ENCODE measurements at regions of chr1 and their contacts with region 1.

Region 1: DNA sequence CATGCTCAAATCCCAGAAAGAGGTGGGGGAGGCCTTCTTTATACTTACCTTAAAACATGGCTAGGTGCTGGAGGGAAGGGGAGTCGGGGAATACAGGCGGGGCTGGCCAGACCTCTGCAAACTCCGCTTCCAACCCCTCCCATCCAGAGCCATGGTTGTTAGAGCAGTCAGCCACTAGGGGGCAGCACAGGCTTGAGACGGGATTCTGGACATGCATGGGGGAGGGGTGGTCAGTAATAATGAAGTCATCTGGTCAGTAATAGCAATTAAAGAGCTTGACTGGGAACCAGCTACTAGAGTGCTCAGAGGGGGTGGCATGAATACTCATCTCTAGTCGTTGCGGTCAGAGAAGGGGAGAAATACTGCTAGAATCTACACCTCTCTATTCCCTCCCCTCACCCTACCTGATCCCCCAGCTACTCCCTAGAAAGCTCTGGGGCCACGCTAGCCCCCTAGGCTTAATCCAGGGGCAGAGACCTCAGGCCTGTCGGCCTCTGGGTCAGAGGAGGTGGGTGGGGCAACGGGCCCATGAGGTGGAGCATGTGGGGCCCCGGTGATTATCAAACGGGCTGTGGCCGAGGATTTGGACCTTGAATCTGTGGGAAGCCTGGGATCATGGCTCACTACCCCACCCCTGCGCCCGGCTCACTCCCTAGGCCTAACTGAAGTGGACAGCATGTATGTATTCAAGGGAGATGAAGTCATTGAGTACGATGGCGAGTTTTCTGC is 2.9 kb downstream of the CASQ1 start:
- DNase-seq: peak; percentile 83
- H3K4me3 ChIP-seq: no peak overlapping the region
- H3K27ac ChIP-seq: no peak overlapping the region
- H3K4me1 ChIP-seq: peaks cover 7% of the 10 kb centered on the region
- CTCF ChIP-seq: peak; percentile 96

Region 2: GRCh38 chr1:160219062-160219929 is 26.0 kb after region 1 on chr1:
- CTCF ChIA-PET with region 1: interaction called, 3 read pairs
- POLR2A ChIA-PET with region 1: no interaction called
- intact Hi-C with region 1: loop called (anchors 1 kb)
- DNase-seq: no peak
- H3K4me3 ChIP-seq: no peak overlapping the region
- H3K27ac ChIP-seq: no peak overlapping the region
- H3K4me1 ChIP-seq: no peaks in the 10 kb centered on the region
- CTCF ChIP-seq: peak; percentile 49

Region 3: GRCh38 chr1:160251687-160252526 is 58.7 kb after region 1 on chr1:
- CTCF ChIA-PET with region 1: interaction called, 12 read pairs
- POLR2A ChIA-PET with region 1: interaction called, 4 read pairs
- intact Hi-C with region 1: loop called (anchors 1 kb)
- DNase-seq: peak; percentile 83
- H3K4me3 ChIP-seq: no peak overlapping the region
- H3K27ac ChIP-seq: no peak overlapping the region
- H3K4me1 ChIP-seq: no peaks in the 10 kb centered on the region
- CTCF ChIP-seq: peak; percentile 96

Region 4: DNA sequence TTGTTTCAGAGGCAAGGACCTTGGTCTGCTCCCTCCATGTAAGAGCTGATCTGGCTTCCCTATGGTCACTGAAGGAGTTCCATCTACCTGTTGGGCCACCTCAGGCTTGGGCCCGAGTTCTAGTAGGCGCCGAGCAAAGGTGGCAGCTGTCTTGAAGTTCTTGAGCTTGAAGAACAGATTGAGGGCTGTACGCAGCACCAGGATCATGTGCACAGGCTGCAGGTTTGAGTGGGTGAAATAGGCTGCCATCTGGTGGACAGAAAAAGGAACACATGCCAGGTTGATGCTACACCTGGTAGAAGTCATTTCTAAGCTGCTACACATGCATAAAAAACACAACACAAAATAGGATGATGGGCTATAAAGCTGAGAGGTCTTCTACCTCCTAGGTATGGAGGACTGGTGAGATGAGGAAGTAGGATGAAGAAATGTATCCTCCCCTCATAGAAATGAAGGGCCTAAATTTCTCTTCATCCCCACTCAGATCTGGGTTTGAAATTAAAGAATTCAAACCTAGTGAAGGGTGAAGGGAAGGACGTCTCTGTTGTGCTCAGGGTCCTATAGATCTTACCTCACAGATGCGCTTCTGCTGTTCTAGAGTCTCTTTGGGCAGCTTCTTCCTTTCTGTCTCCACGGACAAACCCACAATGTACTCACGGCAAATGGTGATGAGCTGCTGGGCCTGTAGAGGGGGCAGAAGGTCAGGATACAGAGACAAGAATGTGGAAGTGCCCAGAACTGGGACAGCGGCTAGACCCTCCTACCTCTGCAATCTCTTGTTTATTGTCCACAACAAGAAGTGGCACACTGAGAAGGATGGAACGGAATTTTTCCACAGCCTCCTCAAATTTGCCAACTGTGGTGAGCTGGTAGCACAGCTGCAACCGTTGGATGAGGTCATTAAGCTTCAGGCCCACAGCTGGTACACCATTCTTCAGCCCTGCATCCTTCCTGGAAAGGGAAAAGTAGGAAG is 98.3 kb after region 1 on chr1:
- CTCF ChIA-PET with region 1: interaction called, 7 read pairs
- POLR2A ChIA-PET with region 1: interaction called, 9 read pairs
- intact Hi-C with region 1: loop called (anchors 1 kb)
- DNase-seq: peak; percentile 75
- H3K4me3 ChIP-seq: no peak overlapping the region
- H3K27ac ChIP-seq: no peak overlapping the region
- H3K4me1 ChIP-seq: no peaks in the 10 kb centered on the region
- CTCF ChIP-seq: peak; percentile 92

Region 5: GRCh38 chr1:160342953-160343869 is 150.0 kb after region 1 on chr1 and contains the starts of genes COPA and NCSTN:
- CTCF ChIA-PET with region 1: no interaction called
- POLR2A ChIA-PET with region 1: no interaction called
- intact Hi-C with region 1: no loop called
- DNase-seq: peak; percentile 97
- H3K4me3 ChIP-seq: peak within 1 kb of the TSS; percentile 87
- H3K27ac ChIP-seq: peak within 1 kb of the TSS; percentile 60
- H3K4me1 ChIP-seq: peaks cover 44% of the 10 kb centered on the region
- CTCF ChIP-seq: no peak
- total RNA-seq, gene COPA: 74.2 and 93.0 TPM in 2 replicates
- total RNA-seq, gene NCSTN: 32.0 and 44.8 TPM in 2 replicates

Region 6: DNA sequence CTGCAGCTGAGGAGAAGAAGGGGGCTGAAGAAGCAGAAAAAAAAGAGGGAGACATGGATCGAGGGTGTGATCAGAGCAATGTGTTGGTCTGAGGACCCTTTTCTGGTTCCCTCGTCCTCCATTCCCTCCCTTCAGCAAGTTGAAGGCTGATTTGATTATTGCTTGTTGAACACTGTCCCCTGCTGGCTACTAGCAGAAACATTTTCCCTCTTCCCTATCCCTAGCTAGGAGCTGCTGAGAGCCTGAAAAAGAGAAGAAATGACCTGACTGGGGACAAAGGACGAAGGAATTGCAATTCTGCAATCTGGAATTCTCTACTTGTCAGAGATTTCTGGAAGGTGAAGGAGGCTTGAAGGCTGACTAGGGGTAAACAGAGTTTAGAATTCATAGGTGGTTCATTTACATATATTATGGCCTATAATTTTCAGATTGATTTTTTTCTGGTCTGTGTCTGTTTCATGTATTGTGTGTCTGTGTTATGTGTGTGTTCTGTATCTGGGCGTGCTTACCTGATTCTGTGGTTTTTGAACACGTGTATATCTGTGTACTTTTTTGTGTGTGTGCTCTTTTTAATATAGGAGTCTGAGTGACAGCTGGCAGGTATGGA is 183.4 kb after region 1 on chr1:
- CTCF ChIA-PET with region 1: interaction called, 6 read pairs
- POLR2A ChIA-PET with region 1: interaction called, 3 read pairs
- intact Hi-C with region 1: loop called (anchors 1 kb)
- DNase-seq: peak; percentile 81
- H3K4me3 ChIP-seq: no peak overlapping the region
- H3K27ac ChIP-seq: peak overlapping the region; percentile 44
- H3K4me1 ChIP-seq: peaks cover 21% of the 10 kb centered on the region
- CTCF ChIP-seq: peak; percentile 99

Measured in OCI-LY7 (cell line).